Dendritic cell treated with granulocyte-macrophage colony-stimulating factor and Interleukin-4, amounts not matched to agents 40 ng/mL and 50 ng/mL, for 4 days (primary cell): ENCODE measurements at regions of chr14 and their contacts with region 1.

Region 1: GRCh38 chr14:22653012-22653621 is 9.0 kb upstream of the OR6J1 start:
- H3K4me3 Mint-ChIP-seq: no peak overlapping the region
- H3K27ac Mint-ChIP-seq: no peak overlapping the region
- H3K4me1 Mint-ChIP-seq: no peaks in the 10 kb centered on the region
- H3K27me3 Mint-ChIP-seq: peaks cover 8% of the 10 kb centered on the region

Region 2: DNA sequence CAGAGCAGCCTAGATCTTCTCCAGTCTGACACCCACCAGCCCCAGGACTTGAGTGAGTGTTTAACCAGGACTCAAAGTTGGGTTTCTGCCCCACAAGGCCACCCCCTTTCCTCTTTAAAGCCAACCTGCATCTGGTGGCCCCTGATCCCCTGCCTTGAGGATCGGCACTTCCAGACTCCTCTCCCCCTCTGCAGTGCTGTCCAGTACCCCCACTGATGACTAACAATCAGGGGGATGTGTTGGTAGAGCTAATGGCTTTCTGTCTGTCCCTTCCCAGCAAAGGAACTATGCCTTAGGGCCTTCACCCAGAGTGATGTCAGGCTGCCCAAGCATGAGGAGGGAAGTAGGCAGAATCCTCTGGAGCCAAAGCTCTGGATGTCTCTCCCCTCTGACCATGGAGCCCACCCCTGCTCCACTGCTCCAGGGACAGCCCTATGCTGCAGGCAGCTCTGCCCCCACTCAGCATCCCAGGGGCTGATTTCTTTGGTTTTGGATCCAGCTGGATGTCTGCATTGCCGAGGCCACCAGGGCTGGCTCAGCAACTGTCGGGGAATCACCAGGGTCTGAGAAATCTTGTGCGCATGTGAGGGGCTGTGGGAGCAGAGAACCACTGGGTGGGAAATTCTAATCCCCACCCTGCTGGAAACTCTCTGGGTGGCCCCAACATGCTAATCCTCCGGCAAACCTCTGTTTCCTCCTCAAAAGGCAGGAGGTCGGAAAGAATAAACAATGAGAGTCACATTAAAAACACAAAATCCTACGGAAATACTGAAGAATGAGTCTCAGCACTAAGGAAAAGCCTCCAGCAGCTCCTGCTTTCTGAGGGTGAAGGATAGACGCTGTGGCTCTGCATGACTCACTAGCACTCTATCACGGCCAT is 107.0 kb before region 1 on chr14:
- intact Hi-C with region 1: no loop called
- H3K4me3 Mint-ChIP-seq: no peak overlapping the region
- H3K27ac Mint-ChIP-seq: no peak overlapping the region
- H3K4me1 Mint-ChIP-seq: peaks cover 17% of the 10 kb centered on the region
- H3K27me3 Mint-ChIP-seq: no peaks in the 10 kb centered on the region

Region 3: DNA sequence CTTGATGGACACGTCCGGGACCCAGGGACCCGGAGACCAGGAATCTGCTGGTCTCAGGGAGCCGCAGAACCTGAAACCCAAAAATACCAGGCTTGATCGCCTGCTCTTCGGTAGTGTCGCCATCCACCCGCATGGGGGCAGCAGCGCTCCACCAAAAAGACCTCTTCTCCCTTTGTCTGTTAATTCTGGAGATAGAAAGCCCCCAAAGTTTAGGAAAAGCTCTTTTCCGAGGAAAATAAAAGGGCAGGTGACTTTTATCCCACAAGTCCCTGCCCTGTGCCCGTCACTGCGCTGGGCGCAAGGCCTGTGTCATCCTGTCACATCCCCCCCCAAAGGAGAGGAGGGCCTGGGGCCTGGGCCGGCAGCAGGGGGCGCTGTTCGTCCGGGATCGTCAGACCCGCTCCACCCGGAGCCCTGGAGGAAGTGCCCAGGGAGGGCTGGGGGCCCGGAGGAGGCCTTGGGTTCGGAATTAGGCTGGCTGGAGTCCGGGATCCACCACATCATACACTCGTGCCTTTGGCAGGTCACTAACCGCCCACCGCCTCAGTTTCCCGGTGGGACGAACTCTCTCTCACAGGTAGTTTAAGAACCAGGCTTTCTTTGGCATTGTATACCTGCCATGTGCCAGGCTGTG is 96.0 kb before region 1 on chr14:
- intact Hi-C with region 1: loop called (anchors 2 kb)
- H3K4me3 Mint-ChIP-seq: peak overlapping the region; percentile 71
- H3K27ac Mint-ChIP-seq: peak overlapping the region; percentile 17
- H3K4me1 Mint-ChIP-seq: peaks cover 30% of the 10 kb centered on the region
- H3K27me3 Mint-ChIP-seq: peaks cover 1% of the 10 kb centered on the region

Region 4: GRCh38 chr14:22570132-22570949 is 82.8 kb before region 1 on chr14:
- intact Hi-C with region 1: loop called (anchors 1 kb)
- H3K4me3 Mint-ChIP-seq: no peak overlapping the region
- H3K27ac Mint-ChIP-seq: no peak overlapping the region
- H3K4me1 Mint-ChIP-seq: peaks cover 17% of the 10 kb centered on the region
- H3K27me3 Mint-ChIP-seq: no peaks in the 10 kb centered on the region